ENCODE measurements at regions of chr5 and their contacts with region 1.

Region 1: DNA sequence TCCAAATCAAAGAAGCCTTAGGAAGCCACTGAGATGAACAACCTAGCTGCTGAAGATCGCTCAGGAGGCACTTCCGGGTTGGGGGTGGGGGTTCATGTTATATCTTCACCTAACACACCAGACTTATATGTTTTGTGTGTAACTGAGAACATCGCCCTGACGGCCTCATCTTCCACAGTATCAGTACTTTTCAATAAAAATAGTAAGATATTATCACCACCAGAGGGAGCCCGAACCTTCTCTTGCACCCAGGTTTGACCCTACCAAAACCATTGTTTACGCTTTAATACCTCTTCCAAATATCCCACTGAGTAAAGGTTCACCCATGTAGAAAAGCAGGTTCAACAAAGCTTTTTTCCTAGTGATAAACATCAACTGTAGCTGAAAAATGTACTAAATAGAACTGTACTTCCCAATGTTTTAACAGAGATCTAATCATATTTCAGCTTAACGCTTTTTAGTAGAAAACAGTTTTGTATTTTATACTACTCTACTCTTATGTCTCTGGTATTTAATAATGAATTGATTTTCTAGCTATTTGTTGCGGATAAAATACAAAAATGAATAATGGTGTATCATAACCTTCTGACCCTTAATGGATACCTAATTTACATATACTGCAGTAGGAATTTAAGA is 244.0 kb downstream of the EPB41L4A start:
- DNase-seq: peak; percentile 48
- CTCF ChIP-seq: peak; percentile 51

Region 2: DNA sequence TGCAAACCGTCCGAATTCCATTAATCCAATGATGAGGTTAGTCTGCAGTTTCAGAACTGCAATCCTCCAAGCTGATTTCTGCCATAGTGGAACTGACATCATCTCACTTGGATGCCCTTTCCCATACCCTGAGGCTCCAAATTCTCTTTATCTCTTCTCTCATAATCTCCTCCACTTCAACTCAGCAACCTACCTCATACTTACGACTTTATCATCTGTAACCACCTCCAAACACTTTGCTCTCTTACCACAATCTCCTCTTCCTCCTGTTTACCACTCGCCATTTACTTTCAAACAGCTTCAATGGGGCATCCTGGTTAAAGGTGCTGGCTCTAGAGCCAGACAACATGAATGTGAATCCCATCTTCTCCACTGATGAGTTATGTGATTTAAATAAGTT is 20.8 kb after region 1 on chr5:
- CTCF ChIA-PET with region 1: interaction called, 13 read pairs
- POLR2A ChIA-PET with region 1: no interaction called
- DNase-seq: no peak
- CTCF ChIP-seq: no peak

Region 3: GRCh38 chr5:112216140-112216539 is 41.1 kb after region 1 on chr5:
- CTCF ChIA-PET with region 1: interaction called, 10 read pairs
- POLR2A ChIA-PET with region 1: no interaction called
- DNase-seq: no peak
- CTCF ChIP-seq: no peak

Region 4: DNA sequence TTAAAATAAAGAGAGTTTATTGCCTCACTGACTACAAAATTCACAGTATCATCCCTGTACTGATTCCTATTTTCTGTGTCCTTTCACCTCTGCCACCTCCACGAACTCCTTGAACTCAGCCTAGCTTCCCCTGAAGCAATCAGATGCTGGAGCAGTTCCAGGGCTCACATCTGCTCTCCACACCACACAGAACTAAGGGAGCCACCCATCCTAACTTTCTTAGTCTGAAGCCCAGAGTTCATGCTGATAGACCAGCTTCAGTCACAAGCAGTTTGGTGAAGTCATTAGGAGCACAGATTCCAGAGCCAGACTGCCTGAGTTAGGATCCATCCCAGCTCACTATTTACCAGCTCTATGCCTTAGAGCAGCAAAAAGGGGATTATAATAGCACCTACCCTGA is 259.6 kb after region 1 on chr5:
- CTCF ChIA-PET with region 1: interaction called, 12 read pairs
- POLR2A ChIA-PET with region 1: no interaction called
- DNase-seq: no peak
- CTCF ChIP-seq: no peak

Region 5: DNA sequence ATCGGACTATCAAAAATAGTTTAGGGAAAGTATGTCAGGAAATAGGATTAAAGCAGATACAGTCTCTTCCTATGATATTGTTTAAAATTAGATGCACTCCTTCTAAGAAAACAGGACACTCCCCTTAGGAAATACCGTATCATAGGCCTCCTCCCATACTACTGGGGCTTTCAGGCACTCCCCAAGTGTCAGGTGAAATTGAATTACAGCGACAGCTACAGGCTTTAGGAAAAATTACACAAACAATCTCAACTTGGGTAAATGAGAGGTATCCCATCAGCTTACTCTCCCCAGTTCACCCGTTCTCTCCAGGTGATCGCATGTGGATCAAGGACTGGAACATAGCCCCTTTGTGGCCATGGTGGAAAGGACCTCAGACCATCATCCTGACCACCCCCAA is 354.4 kb after region 1 on chr5:
- CTCF ChIA-PET with region 1: interaction called, 11 read pairs
- POLR2A ChIA-PET with region 1: no interaction called
- DNase-seq: no peak
- CTCF ChIP-seq: peak; percentile 37

Measured in GM10248 (cell line).